Activated naive CD4-positive, alpha-beta T cell treated with anti-CD3 and anti-CD28 coated beads, Interleukin-2, amount 10 ng/mL, durations not matched to agents 7 days and 5 days (primary cell): ENCODE measurements at regions of chr6 and their contacts with region 1.

Region 1: DNA sequence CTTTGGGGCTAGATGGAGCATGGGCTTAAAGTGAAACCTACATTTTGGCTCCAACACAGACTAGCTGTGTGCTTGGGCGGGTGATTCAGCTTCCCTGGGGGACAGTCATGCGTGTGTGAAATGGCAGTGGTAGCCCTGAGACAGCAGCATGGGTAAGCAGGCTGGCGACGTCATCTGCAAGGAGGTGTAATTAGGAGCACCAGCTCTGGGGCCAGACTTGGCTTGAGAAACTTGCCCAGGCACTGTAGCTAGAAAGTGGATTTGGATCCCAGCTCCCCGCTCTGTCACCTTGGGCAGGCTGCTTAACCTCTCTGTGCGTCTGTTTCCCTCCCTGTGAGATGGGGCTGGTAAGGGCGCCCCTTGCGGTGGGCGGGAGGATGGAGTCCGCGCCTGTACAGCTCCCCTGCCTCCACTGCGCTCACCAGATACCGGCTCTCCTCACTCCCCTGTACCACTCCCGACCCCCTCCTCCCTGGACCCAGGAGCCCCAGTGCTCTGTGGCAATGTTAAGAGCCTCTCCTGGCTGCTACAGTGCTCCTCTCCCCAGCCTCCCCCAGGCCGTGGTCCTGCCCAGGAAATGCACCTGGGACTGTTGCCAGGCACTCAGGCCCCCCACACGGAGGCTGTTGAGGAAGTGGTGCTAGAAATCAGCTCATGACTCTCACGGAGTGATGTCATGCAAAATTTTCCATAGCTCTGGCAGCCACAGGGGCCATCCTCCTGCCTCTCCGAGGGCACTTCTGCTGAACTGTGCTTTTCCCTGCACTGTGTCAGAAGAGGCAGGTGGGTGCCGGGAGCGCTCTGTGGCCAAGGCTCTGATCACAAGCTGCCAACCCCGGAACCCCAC is 44.6 kb downstream of the SYNJ2 start:
- DNase-seq: peak; percentile 87
- H3K4me3 Mint-ChIP-seq: peak overlapping the region; percentile 71
- H3K27ac Mint-ChIP-seq: peak overlapping the region; percentile 98
- H3K4me1 Mint-ChIP-seq: peaks cover 53% of the 10 kb centered on the region
- H3K27me3 Mint-ChIP-seq: no peaks in the 10 kb centered on the region

Region 2: GRCh38 chr6:157962601-157963302 is 63.5 kb before region 1 on chr6:
- CTCF ChIA-PET with region 1: interaction called, 11 read pairs
- DNase-seq: peak; percentile 53
- H3K4me3 Mint-ChIP-seq: peak overlapping the region; percentile 76
- H3K27ac Mint-ChIP-seq: peak overlapping the region; percentile 98
- H3K4me1 Mint-ChIP-seq: peaks cover 34% of the 10 kb centered on the region
- H3K27me3 Mint-ChIP-seq: peaks cover 16% of the 10 kb centered on the region

Region 3: GRCh38 chr6:157989541-157990289 is 36.6 kb before region 1 on chr6:
- CTCF ChIA-PET with region 1: interaction called, 34 read pairs
- DNase-seq: peak; percentile 31
- H3K4me3 Mint-ChIP-seq: peak overlapping the region; percentile 65
- H3K27ac Mint-ChIP-seq: peak overlapping the region; percentile 88
- H3K4me1 Mint-ChIP-seq: peaks cover 68% of the 10 kb centered on the region
- H3K27me3 Mint-ChIP-seq: no peaks in the 10 kb centered on the region

Region 4: GRCh38 chr6:158047127-158047518 is 20.8 kb after region 1 on chr6:
- CTCF ChIA-PET with region 1: interaction called, 11 read pairs
- DNase-seq: peak; percentile 58
- H3K4me3 Mint-ChIP-seq: no peak overlapping the region
- H3K27ac Mint-ChIP-seq: peak overlapping the region; percentile 58
- H3K4me1 Mint-ChIP-seq: peaks cover 24% of the 10 kb centered on the region
- H3K27me3 Mint-ChIP-seq: no peaks in the 10 kb centered on the region

Region 5: GRCh38 chr6:158072083-158072721 is 45.9 kb after region 1 on chr6:
- CTCF ChIA-PET with region 1: interaction called, 37 read pairs
- DNase-seq: peak; percentile 79
- H3K4me3 Mint-ChIP-seq: no peak overlapping the region
- H3K27ac Mint-ChIP-seq: no peak overlapping the region
- H3K4me1 Mint-ChIP-seq: peaks cover 28% of the 10 kb centered on the region
- H3K27me3 Mint-ChIP-seq: no peaks in the 10 kb centered on the region